Left colon (tissue), 2 donors: ENCODE measurements at regions of chr10 and their contacts with region 1.

Region 1: GRCh38 chr10:69639291-69640195 is 9.5 kb downstream of the FAM241B start:
- DNase-seq: peak; percentile 43 to 76
- ATAC-seq: peak; percentile 78

Region 2: DNA sequence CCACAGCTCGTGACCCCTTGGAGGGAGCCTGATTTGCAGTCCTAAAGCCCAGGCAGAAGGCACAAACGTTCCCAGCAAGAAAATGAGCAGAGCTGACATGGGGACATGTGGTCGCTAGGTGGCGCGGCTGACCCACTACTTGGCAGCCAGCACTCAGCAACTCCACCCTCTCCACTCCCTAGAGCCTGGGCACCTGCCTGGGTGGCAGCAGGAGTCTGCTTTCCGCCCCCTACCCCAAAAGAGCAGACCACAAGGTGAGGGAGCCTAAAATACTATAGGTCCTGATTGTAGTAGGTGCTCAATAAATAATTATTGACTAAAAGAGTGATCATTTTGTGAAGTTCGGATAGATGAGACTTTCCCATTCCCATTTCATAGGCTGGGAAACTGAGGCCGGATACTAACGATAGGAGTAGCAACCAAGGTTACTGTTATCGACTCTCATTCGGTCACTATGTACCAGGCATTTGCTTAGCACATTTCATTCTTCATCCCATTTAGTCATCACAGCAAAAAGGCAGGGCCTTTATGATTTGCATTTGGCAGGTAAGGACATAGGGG is 123.8 kb before region 1 on chr10:
- intact Hi-C with region 1: loop called (anchors 2 to 10 kb)
- DNase-seq: peak; percentile 52 to 87
- ATAC-seq: peak; percentile 93

Region 3: DNA sequence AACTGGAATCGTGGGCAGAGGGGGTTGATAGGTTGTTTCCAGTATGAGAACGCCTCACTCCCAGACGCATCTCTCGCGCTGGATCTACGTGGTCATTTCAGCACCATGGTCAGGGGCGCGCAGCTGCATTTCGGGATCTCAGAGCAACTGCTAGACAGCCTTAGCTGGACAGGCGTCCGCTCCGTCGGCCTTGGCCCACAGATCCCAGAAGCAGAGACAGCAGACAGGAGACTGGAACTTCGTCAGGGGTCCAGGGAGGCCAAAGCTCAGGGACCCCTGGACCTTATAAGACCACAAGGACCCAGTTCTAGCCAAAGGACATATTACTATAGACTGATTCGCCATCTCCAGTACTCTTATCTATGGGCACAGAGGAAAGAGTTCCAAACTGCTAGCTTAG is 71.6 kb before region 1 on chr10:
- intact Hi-C with region 1: no loop called
- DNase-seq: peak in 1 of 2 donors; percentile 41
- ATAC-seq: no peak

Region 4: DNA sequence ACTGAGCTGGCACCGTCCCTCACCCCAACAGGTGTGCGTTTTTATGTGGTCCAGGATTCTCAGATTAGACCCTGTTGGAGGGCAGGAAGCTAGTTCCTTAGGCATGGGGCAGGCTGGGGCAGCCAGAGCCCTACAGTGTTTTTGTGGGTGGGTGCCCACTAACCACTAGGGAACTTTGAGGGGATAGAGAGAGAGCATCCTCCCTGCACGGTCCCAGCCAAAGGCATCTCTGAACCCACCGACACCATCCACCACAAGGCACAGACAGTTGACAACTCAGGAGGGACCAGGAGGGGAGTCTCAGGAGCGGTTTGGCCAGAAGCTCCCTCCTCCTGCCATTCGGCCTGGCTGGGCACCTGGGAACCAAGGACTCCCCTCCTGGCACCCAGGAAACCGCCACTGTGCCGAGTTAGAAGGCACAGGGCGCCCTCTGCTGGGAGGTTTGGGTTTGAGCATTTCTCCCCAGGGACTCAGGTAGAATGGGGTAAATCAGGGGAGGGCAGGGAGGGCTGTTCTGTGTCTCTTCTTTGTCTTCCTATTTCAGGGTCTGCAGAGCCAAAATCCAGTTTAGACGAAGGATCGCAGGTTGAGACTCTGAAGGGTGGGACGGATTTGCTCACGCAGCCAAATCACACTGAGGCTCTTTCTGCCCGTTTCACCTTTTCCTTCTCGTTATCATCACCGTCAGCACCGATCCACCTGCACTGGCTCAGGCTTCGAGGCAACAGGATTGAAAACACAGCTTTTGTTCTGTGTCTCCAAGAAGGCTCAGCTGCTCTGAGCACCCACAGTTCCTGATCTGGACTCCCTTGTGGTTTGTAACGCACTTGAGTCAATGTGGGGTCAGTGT is 77.4 kb after region 1 on chr10:
- intact Hi-C with region 1: loop called (anchors 5 to 10 kb)
- DNase-seq: peak in 1 of 2 donors; percentile 73
- ATAC-seq: peak; percentile 82

Region 5: DNA sequence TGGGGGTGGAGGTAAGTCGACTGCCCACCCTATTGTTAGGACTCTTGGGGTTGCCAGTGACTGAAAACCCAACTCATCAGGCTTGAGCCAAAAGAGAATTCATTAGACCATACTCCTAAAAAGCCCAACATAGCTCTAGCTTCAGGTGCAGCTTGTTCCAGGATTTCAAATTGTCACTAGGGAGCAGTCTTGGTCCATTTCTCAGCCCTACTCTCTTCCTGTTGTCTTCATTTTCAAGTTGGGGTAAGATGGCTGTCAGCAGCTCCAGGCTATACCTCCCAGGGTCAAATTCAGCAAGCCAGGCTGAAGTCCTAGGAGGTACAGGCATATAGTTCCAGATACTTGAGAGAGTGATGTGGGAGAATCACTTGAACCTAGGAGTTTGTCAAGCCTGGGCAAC is 147.2 kb after region 1 on chr10:
- intact Hi-C with region 1: no loop called
- DNase-seq: no peak
- ATAC-seq: peak; percentile 45

Region 6: GRCh38 chr10:69914398-69915214 is 275.1 kb after region 1 on chr10:
- intact Hi-C with region 1: loop called in 1 of 2 experiments (anchors 10 kb)
- DNase-seq: peak; percentile 61 to 81
- ATAC-seq: peak; percentile 64

Region 7: GRCh38 chr10:69988094-69988493 is 348.6 kb after region 1 on chr10:
- intact Hi-C with region 1: no loop called
- DNase-seq: no peak
- ATAC-seq: no peak